Motor neuron (in vitro differentiated cells): ENCODE measurements at regions of chrX and their contacts with region 1.

Region 1: DNA sequence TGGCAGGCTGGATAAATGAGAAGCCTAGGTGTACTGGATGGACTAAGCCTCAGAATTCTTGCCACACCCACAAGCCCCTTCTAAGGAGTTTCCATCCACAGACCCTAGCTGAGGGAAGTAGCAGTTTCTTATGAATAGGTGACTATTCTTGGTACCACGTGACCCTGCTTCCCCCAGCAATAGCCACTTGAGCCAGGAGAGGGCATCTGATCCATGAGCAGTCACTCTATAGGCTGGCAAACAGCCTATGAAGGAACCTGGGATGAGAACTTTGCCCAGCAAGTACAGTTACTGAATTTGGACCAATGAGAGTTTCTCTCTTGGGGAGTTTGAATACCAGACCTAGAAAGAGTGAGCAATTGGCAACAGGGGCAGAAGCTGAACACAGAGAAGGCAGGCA is 84.0 kb downstream of the RTL9 start:
- ATAC-seq: peak in 6 of 8 experiments; percentile 31 to 83 (median 40)
- H3K4me3 ChIP-seq: no peak overlapping the region
- H3K27ac ChIP-seq: no peak overlapping the region
- H3K4me1 ChIP-seq: peaks cover 16% of the 10 kb centered on the region in 2 donors

Region 2: GRCh38 chrX:110201799-110202198 is 240.8 kb before region 1 on chrX:
- in situ Hi-C with region 1: no loop called
- ATAC-seq: no peak
- H3K4me3 ChIP-seq: no peak overlapping the region
- H3K27ac ChIP-seq: no peak overlapping the region
- H3K4me1 ChIP-seq: no peaks in the 10 kb centered on the region

Region 3: GRCh38 chrX:110847334-110847733 is 404.7 kb after region 1 on chrX:
- in situ Hi-C with region 1: loop called in 3 of 9 experiments (anchors 10 to 25 kb)
- ATAC-seq: peak; percentile 49 to 94 (median 69)
- H3K4me3 ChIP-seq: no peak overlapping the region
- H3K27ac ChIP-seq: no peak overlapping the region
- H3K4me1 ChIP-seq: no peaks in the 10 kb centered on the region

Region 4: DNA sequence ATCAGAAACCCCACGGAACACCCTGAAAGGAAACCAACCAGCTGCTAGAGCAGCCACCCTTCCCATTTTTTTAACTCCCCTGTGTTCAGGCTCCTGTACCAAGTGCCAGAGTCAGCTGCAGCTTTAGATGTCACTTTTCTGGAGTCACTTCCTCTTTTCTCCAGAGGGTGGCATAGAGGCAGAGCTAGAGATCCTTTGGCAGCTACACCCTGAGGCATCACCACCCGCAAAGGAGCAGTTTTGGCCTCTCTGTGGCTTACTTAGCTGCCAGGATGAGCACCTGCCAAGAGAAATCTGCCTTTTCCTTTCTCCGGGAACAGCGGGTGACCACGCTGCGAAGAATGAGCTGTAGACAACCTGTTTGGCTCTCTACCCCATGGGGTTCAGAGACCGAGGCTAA is 411.0 kb after region 1 on chrX:
- in situ Hi-C with region 1: loop called in 3 of 9 experiments (anchors 10 to 25 kb)
- ATAC-seq: peak in 5 of 8 experiments; percentile 42 to 93 (median 66)
- H3K4me3 ChIP-seq: no peak overlapping the region
- H3K27ac ChIP-seq: no peak overlapping the region
- H3K4me1 ChIP-seq: no peaks in the 10 kb centered on the region

Region 5: DNA sequence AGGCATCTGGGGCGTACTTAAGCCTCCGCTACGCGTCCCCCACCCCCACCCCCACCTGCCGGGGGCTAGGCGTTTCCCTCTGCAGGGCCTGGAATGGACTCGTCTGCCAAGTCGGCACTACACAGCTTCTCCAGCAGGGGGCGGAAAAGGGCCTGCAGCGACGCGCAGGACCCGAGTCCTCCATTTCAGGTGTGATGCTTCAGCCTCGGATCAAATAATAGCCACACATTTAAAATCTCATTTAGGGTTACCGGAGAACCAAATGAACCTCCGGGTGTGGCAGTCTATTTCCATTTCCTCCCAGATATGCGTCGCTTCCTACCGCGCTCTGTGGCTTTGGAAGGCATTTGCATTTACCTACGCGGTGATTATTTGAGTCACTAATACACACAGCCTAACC is 656.2 kb after region 1 on chrX:
- in situ Hi-C with region 1: loop called in 1 of 9 experiments (anchors 25 kb)
- ATAC-seq: peak in 1 of 8 experiments; percentile 8
- H3K4me3 ChIP-seq: no peak overlapping the region
- H3K27ac ChIP-seq: no peak overlapping the region
- H3K4me1 ChIP-seq: peaks cover 0 to 7% of the 10 kb centered on the region in 2 donors

Region 6: GRCh38 chrX:111244235-111244750 is 801.7 kb after region 1 on chrX:
- in situ Hi-C with region 1: loop called in 1 of 9 experiments (anchors 25 kb)
- ATAC-seq: no peak
- H3K4me3 ChIP-seq: no peak overlapping the region
- H3K27ac ChIP-seq: no peak overlapping the region
- H3K4me1 ChIP-seq: no peaks in the 10 kb centered on the region